ENCODE measurements at regions of chr7 and their contacts with region 1.

Region 1: GRCh38 chr7:12638851-12639467 is 48.5 kb upstream of the ARL4A start:
- DNase-seq: peak; percentile 71
- ATAC-seq: peak; percentile 51
- H3K4me3 ChIP-seq: peak overlapping the region in 1 of 5 experiments; percentile 50
- H3K4me3 Mint-ChIP-seq: no peak overlapping the region
- H3K27ac ChIP-seq: peak overlapping the region in 1 of 2 donors; percentile 65
- H3K27ac Mint-ChIP-seq: no peak overlapping the region
- H3K4me1 ChIP-seq: peaks cover 24 to 33% of the 10 kb centered on the region in 2 donors
- H3K4me1 Mint-ChIP-seq: peaks cover 21% of the 10 kb centered on the region
- H3K27me3 ChIP-seq: no peaks in the 10 kb centered on the region
- H3K27me3 Mint-ChIP-seq: peaks cover 3% of the 10 kb centered on the region
- CTCF ChIP-seq: peak; percentile 87

Region 2: DNA sequence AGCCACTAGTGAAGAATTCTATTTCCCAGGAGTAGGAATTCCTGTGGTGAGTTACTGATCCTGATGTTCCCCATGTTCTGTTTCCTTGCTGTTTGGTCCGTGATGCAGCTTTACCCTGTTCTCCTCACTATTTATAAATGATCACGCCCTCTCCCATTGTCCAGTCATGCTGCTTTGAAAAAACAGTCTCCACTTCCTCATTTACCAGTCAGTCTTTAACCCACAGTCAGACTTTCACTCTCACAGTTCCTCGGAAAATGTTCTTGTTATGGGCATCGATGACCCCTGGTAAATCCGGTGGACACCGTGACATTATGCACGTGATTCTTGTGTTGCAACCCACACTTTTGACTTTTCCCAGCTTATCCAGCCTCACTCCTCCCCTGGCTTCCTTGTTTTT is 54.0 kb before region 1 on chr7:
- CTCF ChIA-PET with region 1: no interaction called
- POLR2A ChIA-PET with region 1: no interaction called
- intact Hi-C with region 1: no loop called
- DNase-seq: peak; percentile 10
- ATAC-seq: peak; percentile 58
- H3K4me3 ChIP-seq: no peak overlapping the region
- H3K4me3 Mint-ChIP-seq: no peak overlapping the region
- H3K27ac ChIP-seq: no peak overlapping the region
- H3K27ac Mint-ChIP-seq: no peak overlapping the region
- H3K4me1 ChIP-seq: peaks cover 5 to 6% of the 10 kb centered on the region in 2 donors
- H3K4me1 Mint-ChIP-seq: peaks cover 11% of the 10 kb centered on the region
- H3K27me3 ChIP-seq: no peaks in the 10 kb centered on the region
- H3K27me3 Mint-ChIP-seq: no peaks in the 10 kb centered on the region
- CTCF ChIP-seq: no peak

Region 3: DNA sequence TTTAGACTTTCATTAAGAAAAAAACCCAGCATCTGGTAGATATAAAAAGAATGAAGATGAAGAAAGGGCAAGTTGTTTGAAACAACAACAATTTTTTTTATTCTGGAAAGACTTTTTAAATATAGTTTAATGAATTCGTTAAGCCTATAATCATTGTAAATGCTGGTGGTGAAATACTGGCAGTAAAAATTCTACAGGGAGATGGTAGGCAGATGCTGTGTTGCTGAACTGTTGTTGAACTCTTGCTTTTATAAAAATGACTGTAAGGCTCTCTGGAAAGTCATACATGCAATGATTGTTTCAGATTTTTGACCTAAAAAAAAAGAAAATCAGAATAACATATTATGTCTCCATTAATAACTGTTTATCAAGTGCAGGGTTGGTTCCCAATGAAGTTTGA is 29.4 kb before region 1 on chr7:
- CTCF ChIA-PET with region 1: no interaction called
- POLR2A ChIA-PET with region 1: no interaction called
- intact Hi-C with region 1: no loop called
- DNase-seq: no peak
- ATAC-seq: no peak
- H3K4me3 ChIP-seq: no peak overlapping the region
- H3K4me3 Mint-ChIP-seq: no peak overlapping the region
- H3K27ac ChIP-seq: no peak overlapping the region
- H3K27ac Mint-ChIP-seq: no peak overlapping the region
- H3K4me1 ChIP-seq: no peaks in the 10 kb centered on the region
- H3K4me1 Mint-ChIP-seq: no peaks in the 10 kb centered on the region
- H3K27me3 ChIP-seq: no peaks in the 10 kb centered on the region
- H3K27me3 Mint-ChIP-seq: peaks cover 4% of the 10 kb centered on the region
- CTCF ChIP-seq: no peak

Region 4: GRCh38 chr7:13017333-13017853 is 378.4 kb after region 1 on chr7:
- CTCF ChIA-PET with region 1: no interaction called
- POLR2A ChIA-PET with region 1: no interaction called
- intact Hi-C with region 1: no loop called
- DNase-seq: no peak
- ATAC-seq: no peak
- H3K4me3 ChIP-seq: no peak overlapping the region
- H3K4me3 Mint-ChIP-seq: no peak overlapping the region
- H3K27ac ChIP-seq: no peak overlapping the region
- H3K27ac Mint-ChIP-seq: no peak overlapping the region
- H3K4me1 ChIP-seq: no peaks in the 10 kb centered on the region
- H3K4me1 Mint-ChIP-seq: no peaks in the 10 kb centered on the region
- H3K27me3 ChIP-seq: peaks cover 0 to 4% (median 0%) of the 10 kb centered on the region in 4 experiments
- H3K27me3 Mint-ChIP-seq: no peaks in the 10 kb centered on the region
- CTCF ChIP-seq: no peak

Region 5: DNA sequence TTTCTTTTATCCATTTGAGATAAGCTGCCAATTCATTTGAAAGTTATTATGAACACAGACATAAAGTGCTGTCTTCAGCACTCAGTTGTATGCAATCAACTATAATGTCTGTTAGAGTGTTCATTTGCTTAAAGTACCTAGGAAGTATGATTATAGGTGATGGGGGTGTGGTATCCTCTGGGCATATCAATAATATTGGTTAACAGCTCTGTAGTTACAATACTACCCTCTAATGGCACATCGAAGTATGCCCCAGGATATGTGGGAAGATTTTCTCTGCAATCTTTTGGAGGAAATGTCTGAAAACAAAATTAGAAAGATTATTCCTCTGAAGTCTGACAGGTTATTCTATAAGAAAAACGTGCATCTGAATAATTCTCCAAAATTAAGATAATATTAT is 478.1 kb after region 1 on chr7:
- CTCF ChIA-PET with region 1: interaction called, 10 read pairs
- POLR2A ChIA-PET with region 1: no interaction called
- intact Hi-C with region 1: loop called (anchors 2 kb)
- DNase-seq: peak; percentile 18
- ATAC-seq: no peak
- H3K4me3 ChIP-seq: no peak overlapping the region
- H3K4me3 Mint-ChIP-seq: no peak overlapping the region
- H3K27ac ChIP-seq: no peak overlapping the region
- H3K27ac Mint-ChIP-seq: no peak overlapping the region
- H3K4me1 ChIP-seq: no peaks in the 10 kb centered on the region
- H3K4me1 Mint-ChIP-seq: peaks cover 3% of the 10 kb centered on the region
- H3K27me3 ChIP-seq: no peaks in the 10 kb centered on the region
- H3K27me3 Mint-ChIP-seq: no peaks in the 10 kb centered on the region
- CTCF ChIP-seq: no peak

Region 6: DNA sequence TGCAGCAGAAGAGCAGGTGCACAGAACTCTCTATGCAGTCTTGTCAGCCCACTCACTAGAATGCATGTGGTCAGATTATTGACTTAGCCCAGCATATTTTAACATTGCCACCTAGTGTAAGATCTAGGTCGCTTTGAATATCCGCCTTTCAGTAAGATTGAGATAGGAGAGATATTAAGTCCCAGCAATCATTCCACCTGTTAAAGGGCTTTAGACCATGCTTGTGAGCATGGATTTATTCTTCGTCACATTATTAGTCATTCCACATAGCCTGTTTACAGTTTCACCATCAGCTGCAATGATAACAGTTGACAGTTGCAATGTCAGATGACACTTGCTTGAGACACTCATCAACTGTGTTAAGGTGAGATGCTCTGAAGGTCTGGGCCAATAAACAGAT is 540.1 kb after region 1 on chr7:
- CTCF ChIA-PET with region 1: no interaction called
- POLR2A ChIA-PET with region 1: no interaction called
- intact Hi-C with region 1: loop called (anchors 2 kb)
- DNase-seq: peak; percentile 9
- ATAC-seq: no peak
- H3K4me3 ChIP-seq: no peak overlapping the region
- H3K4me3 Mint-ChIP-seq: no peak overlapping the region
- H3K27ac ChIP-seq: no peak overlapping the region
- H3K27ac Mint-ChIP-seq: no peak overlapping the region
- H3K4me1 ChIP-seq: no peaks in the 10 kb centered on the region
- H3K4me1 Mint-ChIP-seq: no peaks in the 10 kb centered on the region
- H3K27me3 ChIP-seq: no peaks in the 10 kb centered on the region
- H3K27me3 Mint-ChIP-seq: peaks cover 9% of the 10 kb centered on the region
- CTCF ChIP-seq: no peak

Region 7: GRCh38 chr7:13262929-13263530 is 624.1 kb after region 1 on chr7:
- CTCF ChIA-PET with region 1: interaction called, 45 read pairs
- POLR2A ChIA-PET with region 1: no interaction called
- intact Hi-C with region 1: loop called (anchors 1 kb)
- DNase-seq: peak; percentile 59
- ATAC-seq: no peak
- H3K4me3 ChIP-seq: no peak overlapping the region
- H3K4me3 Mint-ChIP-seq: no peak overlapping the region
- H3K27ac ChIP-seq: no peak overlapping the region
- H3K27ac Mint-ChIP-seq: no peak overlapping the region
- H3K4me1 ChIP-seq: no peaks in the 10 kb centered on the region
- H3K4me1 Mint-ChIP-seq: no peaks in the 10 kb centered on the region
- H3K27me3 ChIP-seq: no peaks in the 10 kb centered on the region
- H3K27me3 Mint-ChIP-seq: no peaks in the 10 kb centered on the region
- CTCF ChIP-seq: peak; percentile 79

Measured in B cell (primary cell).